CD4-positive, alpha-beta memory T cell (primary cell): ENCODE measurements at regions of chr12 and their contacts with region 1.

Region 1: DNA sequence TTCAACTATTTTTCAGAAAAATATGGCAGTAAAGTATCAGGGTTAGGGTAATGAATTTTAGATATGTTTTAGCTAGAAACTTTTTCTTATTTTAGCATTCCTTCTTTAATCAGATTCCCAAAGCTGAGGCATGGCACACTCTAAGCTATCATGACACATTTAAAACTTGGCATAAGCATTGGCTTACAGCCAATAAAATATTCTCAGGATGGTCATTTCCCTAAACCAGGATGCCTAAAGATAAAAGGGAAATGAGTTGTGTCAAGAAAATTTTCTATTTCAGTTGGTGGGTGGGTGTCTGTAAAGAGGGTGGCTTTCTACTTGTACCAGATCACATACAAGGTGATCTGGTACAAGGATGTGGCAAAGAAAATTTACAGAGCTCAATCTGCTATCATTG is 47.8 kb downstream of the PEBP1 start:
- DNase-seq: no peak
- H3K4me3 ChIP-seq: no peak overlapping the region
- H3K4me3 Mint-ChIP-seq: no peak overlapping the region
- H3K27ac ChIP-seq: no peak overlapping the region
- H3K27ac Mint-ChIP-seq: no peak overlapping the region
- H3K4me1 ChIP-seq: peaks cover 4% of the 10 kb centered on the region
- H3K4me1 Mint-ChIP-seq: peaks cover 12 to 23% (median 14%) of the 10 kb centered on the region in 4 donors
- H3K27me3 ChIP-seq: no peaks in the 10 kb centered on the region
- H3K27me3 Mint-ChIP-seq: no peaks in the 10 kb centered on the region

Region 2: GRCh38 chr12:118164798-118165486 is 18.8 kb before region 1 on chr12:
- CTCF ChIA-PET with region 1: interaction called, 19 read pairs
- POLR2A ChIA-PET with region 1: no interaction called
- intact Hi-C with region 1: no loop called
- DNase-seq: no peak
- H3K4me3 ChIP-seq: no peak overlapping the region
- H3K4me3 Mint-ChIP-seq: no peak overlapping the region
- H3K27ac ChIP-seq: no peak overlapping the region
- H3K27ac Mint-ChIP-seq: peak overlapping the region in 4 of 7 donors; percentile 46 to 59 (median 52)
- H3K4me1 ChIP-seq: no peaks in the 10 kb centered on the region
- H3K4me1 Mint-ChIP-seq: peaks cover 9 to 12% (median 10%) of the 10 kb centered on the region in 4 donors
- H3K27me3 ChIP-seq: no peaks in the 10 kb centered on the region
- H3K27me3 Mint-ChIP-seq: no peaks in the 10 kb centered on the region

Region 3: DNA sequence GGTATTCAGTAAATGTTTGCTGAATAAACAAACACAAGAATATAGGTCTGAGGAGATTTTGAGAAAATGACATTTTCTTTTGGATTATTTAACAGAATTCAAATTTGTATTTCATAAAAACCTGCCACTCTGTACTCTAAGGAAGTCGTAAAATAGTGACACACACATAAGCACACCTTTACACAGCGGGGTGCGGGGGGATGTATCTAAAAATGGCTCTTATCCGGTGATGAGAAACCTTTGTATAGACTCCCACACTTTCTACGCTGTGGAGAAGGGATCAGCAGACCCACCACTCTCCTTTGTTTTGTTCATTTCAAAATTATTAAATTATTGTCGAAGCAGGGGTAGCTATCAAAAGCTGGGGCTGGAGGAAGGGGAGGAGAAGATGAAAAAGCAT is 10.3 kb after region 1 on chr12:
- CTCF ChIA-PET with region 1: interaction called, 17 read pairs
- POLR2A ChIA-PET with region 1: no interaction called
- intact Hi-C with region 1: no loop called
- DNase-seq: no peak
- H3K4me3 ChIP-seq: no peak overlapping the region
- H3K4me3 Mint-ChIP-seq: no peak overlapping the region
- H3K27ac ChIP-seq: no peak overlapping the region
- H3K27ac Mint-ChIP-seq: peak overlapping the region in 2 of 7 donors; percentile 17 to 68
- H3K4me1 ChIP-seq: no peaks in the 10 kb centered on the region
- H3K4me1 Mint-ChIP-seq: peaks cover 0 to 4% (median 0%) of the 10 kb centered on the region in 4 donors
- H3K27me3 ChIP-seq: no peaks in the 10 kb centered on the region
- H3K27me3 Mint-ChIP-seq: no peaks in the 10 kb centered on the region

Region 4: DNA sequence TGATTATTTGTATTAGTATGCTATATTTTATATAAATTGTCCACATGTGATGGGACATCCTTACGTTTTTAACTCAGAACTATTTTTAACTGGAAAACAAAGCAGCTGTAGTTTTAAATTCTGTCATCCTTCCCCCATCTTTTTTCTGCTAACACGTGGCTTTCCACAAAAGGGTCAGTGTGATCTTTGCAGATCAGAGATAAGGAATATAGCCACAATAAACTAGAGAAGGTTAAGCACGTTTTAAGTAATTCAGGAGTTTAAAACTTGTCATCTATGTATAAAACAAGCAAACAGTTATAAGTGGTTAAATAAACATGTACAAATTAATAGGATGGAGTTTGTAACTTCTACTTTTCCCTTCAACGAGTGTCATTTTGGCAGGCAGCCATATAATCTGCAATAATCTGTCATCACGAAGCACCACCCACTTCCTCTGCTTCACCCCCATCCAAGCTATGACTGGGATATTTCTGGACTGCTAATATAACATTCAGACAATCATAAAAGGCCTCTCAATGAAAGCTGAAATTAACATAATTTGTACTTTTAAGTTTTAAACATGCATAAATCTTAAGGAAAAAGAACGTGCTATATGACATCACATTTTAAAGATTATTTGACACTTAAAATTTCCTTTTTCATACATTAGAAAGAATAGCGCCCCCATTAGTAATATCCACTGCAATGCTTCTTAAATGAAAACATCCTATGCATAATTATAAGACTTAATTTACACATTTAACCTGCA is 173.7 kb after region 1 on chr12:
- CTCF ChIA-PET with region 1: interaction called, 3 read pairs
- POLR2A ChIA-PET with region 1: no interaction called
- intact Hi-C with region 1: loop called (anchors 5 kb)
- DNase-seq: peak; percentile 60 to 78 (median 64)
- H3K4me3 ChIP-seq: peak overlapping the region; percentile 15 to 56
- H3K4me3 Mint-ChIP-seq: peak overlapping the region; percentile 63 to 94 (median 82)
- H3K27ac ChIP-seq: peak overlapping the region; percentile 28
- H3K27ac Mint-ChIP-seq: peak overlapping the region; percentile 74 to 93 (median 86)
- H3K4me1 ChIP-seq: peaks cover 41% of the 10 kb centered on the region
- H3K4me1 Mint-ChIP-seq: peaks cover 29 to 67% (median 49%) of the 10 kb centered on the region in 4 donors
- H3K27me3 ChIP-seq: no peaks in the 10 kb centered on the region
- H3K27me3 Mint-ChIP-seq: no peaks in the 10 kb centered on the region